Endothelial cell of umbilical vein (primary cell): ENCODE measurements at regions of chr2 and their contacts with region 1.

Region 1: GRCh38 chr2:160970052-160970965 is 189.9 kb upstream of the TANK start:
- DNase-seq: peak; percentile 90
- H3K4me3 ChIP-seq: peak overlapping the region in 1 of 3 experiments; percentile 53
- H3K27ac ChIP-seq: peak overlapping the region; percentile 71
- H3K4me1 ChIP-seq: no peaks in the 10 kb centered on the region
- H3K27me3 ChIP-seq: no peaks in the 10 kb centered on the region
- CTCF ChIP-seq: peak; percentile 51 to 53
- POLR2A ChIP-seq: no peak

Region 2: DNA sequence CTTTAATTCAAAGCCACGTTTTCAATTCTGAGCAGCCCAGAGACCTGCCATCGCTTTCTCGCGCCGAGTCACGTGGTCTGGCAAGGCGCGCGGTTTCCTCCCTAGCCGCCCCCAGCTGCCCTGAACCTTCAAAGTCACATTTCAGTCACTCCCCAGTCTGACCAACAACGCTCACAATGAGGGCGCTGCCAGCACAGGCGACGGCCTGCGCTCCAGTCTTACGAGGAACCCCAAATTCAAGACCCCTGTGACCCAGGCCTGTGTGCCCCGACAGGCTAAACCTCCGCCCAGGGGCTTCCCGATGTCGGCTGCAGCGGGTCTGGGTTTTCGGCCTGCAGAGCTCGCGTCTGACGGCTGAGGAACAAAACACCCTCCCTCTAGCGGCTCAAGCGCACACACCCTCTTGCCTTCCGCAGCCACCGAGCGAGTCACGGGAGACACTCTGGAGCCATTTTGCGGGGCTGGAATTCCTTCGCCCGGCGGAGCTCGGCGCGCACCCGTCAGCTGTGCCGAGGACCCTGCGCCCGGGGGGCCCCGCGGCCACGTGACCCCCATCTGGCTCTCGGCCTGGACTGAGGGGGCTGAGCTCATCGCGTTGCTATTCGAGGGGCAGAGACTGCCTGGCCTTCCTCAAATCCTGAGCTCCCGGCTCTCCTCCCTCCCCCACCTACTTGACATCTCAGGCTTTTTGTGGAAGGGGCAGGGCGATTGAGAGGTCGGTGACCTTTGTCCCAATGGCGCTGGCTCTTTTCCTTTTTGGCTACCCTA is 700.3 kb before region 1 on chr2:
- CTCF ChIA-PET with region 1: interaction called, 27 read pairs
- POLR2A ChIA-PET with region 1: no interaction called
- dilution Hi-C with region 1: no loop called
- intact Hi-C with region 1: no loop called
- DNase-seq: peak; percentile 92
- H3K4me3 ChIP-seq: peak overlapping the region in 2 of 3 experiments; percentile 34 to 44
- H3K27ac ChIP-seq: peak overlapping the region; percentile 93
- H3K4me1 ChIP-seq: peaks cover 25% of the 10 kb centered on the region
- H3K27me3 ChIP-seq: no peaks in the 10 kb centered on the region
- CTCF ChIP-seq: peak; percentile 65 to 79
- POLR2A ChIP-seq: peak; percentile 76

Region 3: GRCh38 chr2:160332318-160332717 is 638.0 kb before region 1 on chr2:
- CTCF ChIA-PET with region 1: interaction called, 37 read pairs
- POLR2A ChIA-PET with region 1: no interaction called
- dilution Hi-C with region 1: no loop called
- intact Hi-C with region 1: no loop called
- DNase-seq: peak; percentile 70
- H3K4me3 ChIP-seq: no peak overlapping the region
- H3K27ac ChIP-seq: no peak overlapping the region
- H3K4me1 ChIP-seq: peaks cover 35% of the 10 kb centered on the region
- H3K27me3 ChIP-seq: no peaks in the 10 kb centered on the region
- CTCF ChIP-seq: peak in 1 of 2 donors; percentile 1
- POLR2A ChIP-seq: no peak

Region 4: DNA sequence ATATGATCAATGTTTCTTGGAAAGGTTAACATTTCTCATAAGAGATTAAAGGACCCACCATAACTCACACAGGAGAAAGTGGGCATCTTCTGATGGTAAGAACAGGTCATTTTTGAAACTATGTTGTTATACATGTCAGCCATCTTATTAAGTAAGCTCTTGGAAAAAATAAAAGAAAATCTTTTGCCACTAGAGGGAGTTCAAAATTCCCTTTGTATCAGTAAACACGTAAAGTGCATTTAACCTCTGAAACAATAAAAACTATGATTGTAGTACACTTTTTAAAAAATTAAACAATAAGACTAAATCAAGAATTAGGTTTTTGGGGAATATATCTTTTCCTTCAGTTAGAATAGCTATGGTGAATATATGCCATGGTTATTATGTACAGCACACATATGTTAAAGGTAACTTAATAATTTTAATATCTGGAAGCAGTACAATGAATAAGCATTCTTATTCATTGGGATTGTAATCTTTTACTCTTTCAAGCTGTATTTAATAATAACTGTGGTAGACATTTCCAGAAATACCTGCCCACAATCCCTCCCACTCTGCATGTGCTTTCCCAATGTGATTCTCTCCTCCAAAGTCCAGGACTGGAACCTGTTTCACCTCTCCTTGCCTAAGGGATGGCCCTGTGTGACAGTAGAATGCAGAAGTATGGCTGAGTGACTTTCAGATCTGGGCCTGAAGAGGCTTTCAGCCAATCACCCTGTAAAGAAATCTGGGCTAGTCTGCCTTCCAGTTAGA is 540.9 kb before region 1 on chr2:
- CTCF ChIA-PET with region 1: interaction called, 49 read pairs
- POLR2A ChIA-PET with region 1: no interaction called
- dilution Hi-C with region 1: no loop called
- intact Hi-C with region 1: loop called (anchors 1 kb)
- DNase-seq: peak; percentile 77
- H3K4me3 ChIP-seq: no peak overlapping the region
- H3K27ac ChIP-seq: peak overlapping the region; percentile 89
- H3K4me1 ChIP-seq: peaks cover 49% of the 10 kb centered on the region
- H3K27me3 ChIP-seq: no peaks in the 10 kb centered on the region
- CTCF ChIP-seq: peak; percentile 19 to 22
- POLR2A ChIP-seq: no peak

Region 5: DNA sequence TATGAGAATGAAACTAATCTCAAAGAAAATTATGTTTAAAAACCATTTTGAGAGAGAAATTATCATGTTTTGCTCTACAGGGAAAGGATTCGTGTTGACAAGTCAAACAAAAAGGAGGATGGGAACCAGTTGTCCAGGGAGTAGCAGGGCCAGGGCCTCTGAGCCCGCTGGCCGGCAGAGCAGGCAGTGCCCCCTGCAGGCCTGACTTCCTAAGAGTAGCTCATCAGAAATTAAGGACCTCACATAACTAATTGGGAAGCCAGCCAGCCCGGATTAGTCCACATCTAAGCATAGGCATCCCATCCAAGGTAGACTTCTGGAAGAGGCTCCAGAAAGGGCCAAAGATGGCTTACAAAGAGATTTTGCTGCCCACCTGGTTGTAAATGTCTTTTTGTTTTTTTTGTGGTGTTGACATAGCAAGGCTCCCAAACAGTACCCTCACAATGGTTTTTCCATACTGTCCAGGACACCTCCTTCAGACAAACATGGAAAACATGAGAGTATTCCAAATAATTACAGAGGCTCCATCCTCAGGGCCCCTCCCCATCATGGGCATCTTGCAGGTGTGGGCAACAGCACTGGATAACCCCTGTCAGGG is 51.3 kb before region 1 on chr2:
- CTCF ChIA-PET with region 1: interaction called, 11 read pairs
- POLR2A ChIA-PET with region 1: no interaction called
- dilution Hi-C with region 1: no loop called
- intact Hi-C with region 1: no loop called
- DNase-seq: peak; percentile 68
- H3K4me3 ChIP-seq: no peak overlapping the region
- H3K27ac ChIP-seq: no peak overlapping the region
- H3K4me1 ChIP-seq: peaks cover 11% of the 10 kb centered on the region
- H3K27me3 ChIP-seq: no peaks in the 10 kb centered on the region
- CTCF ChIP-seq: peak; percentile 68 to 73
- POLR2A ChIP-seq: no peak

Region 6: GRCh38 chr2:161122772-161123530 is 152.6 kb after region 1 on chr2:
- CTCF ChIA-PET with region 1: no interaction called
- POLR2A ChIA-PET with region 1: no interaction called
- dilution Hi-C with region 1: no loop called
- intact Hi-C with region 1: no loop called
- DNase-seq: peak; percentile 95
- H3K4me3 ChIP-seq: peak overlapping the region in 1 of 3 experiments; percentile 21
- H3K27ac ChIP-seq: peak overlapping the region; percentile 92
- H3K4me1 ChIP-seq: peaks cover 27% of the 10 kb centered on the region
- H3K27me3 ChIP-seq: no peaks in the 10 kb centered on the region
- CTCF ChIP-seq: no peak
- POLR2A ChIP-seq: no peak